B cell (primary cell): ENCODE measurements at regions of chr21 and their contacts with region 1.

Region 1: GRCh38 chr21:28943631-28944030 is 49.0 kb downstream of the LTN1 start:
- DNase-seq: no peak
- ATAC-seq: no peak
- H3K4me3 ChIP-seq: no peak overlapping the region
- H3K4me3 Mint-ChIP-seq: no peak overlapping the region
- H3K27ac ChIP-seq: no peak overlapping the region
- H3K27ac Mint-ChIP-seq: no peak overlapping the region
- H3K4me1 ChIP-seq: no peaks in the 10 kb centered on the region
- H3K4me1 Mint-ChIP-seq: no peaks in the 10 kb centered on the region
- H3K27me3 ChIP-seq: no peaks in the 10 kb centered on the region
- H3K27me3 Mint-ChIP-seq: no peaks in the 10 kb centered on the region
- CTCF ChIP-seq: no peak

Region 2: GRCh38 chr21:28516991-28517592 is 426.5 kb before region 1 on chr21:
- CTCF ChIA-PET with region 1: interaction called, 3 read pairs
- POLR2A ChIA-PET with region 1: no interaction called
- intact Hi-C with region 1: loop called (anchors 5 kb)
- DNase-seq: peak; percentile 67
- ATAC-seq: peak; percentile 82
- H3K4me3 ChIP-seq: no peak overlapping the region
- H3K4me3 Mint-ChIP-seq: no peak overlapping the region
- H3K27ac ChIP-seq: no peak overlapping the region
- H3K27ac Mint-ChIP-seq: no peak overlapping the region
- H3K4me1 ChIP-seq: peaks cover 0 to 9% of the 10 kb centered on the region in 2 donors
- H3K4me1 Mint-ChIP-seq: peaks cover 8% of the 10 kb centered on the region
- H3K27me3 ChIP-seq: no peaks in the 10 kb centered on the region
- H3K27me3 Mint-ChIP-seq: no peaks in the 10 kb centered on the region
- CTCF ChIP-seq: peak; percentile 74

Region 3: GRCh38 chr21:28884976-28885852 is 58.4 kb before region 1 on chr21:
- CTCF ChIA-PET with region 1: no interaction called
- POLR2A ChIA-PET with region 1: no interaction called
- intact Hi-C with region 1: loop called (anchors 5 kb)
- DNase-seq: peak; percentile 97
- ATAC-seq: peak; percentile 92
- H3K4me3 ChIP-seq: peak overlapping the region; percentile 56 to 94 (median 79)
- H3K4me3 Mint-ChIP-seq: peak overlapping the region; percentile 94
- H3K27ac ChIP-seq: peak overlapping the region; percentile 84 to 85
- H3K27ac Mint-ChIP-seq: peak overlapping the region; percentile 98
- H3K4me1 ChIP-seq: peaks cover 6 to 15% of the 10 kb centered on the region in 2 donors
- H3K4me1 Mint-ChIP-seq: peaks cover 20% of the 10 kb centered on the region
- H3K27me3 ChIP-seq: peaks cover 0 to 2% (median 0%) of the 10 kb centered on the region in 4 experiments
- H3K27me3 Mint-ChIP-seq: peaks cover 7% of the 10 kb centered on the region
- CTCF ChIP-seq: no peak